GM12878 (cell line): ENCODE measurements at regions of chr15 and their contacts with region 1.

Region 1: DNA sequence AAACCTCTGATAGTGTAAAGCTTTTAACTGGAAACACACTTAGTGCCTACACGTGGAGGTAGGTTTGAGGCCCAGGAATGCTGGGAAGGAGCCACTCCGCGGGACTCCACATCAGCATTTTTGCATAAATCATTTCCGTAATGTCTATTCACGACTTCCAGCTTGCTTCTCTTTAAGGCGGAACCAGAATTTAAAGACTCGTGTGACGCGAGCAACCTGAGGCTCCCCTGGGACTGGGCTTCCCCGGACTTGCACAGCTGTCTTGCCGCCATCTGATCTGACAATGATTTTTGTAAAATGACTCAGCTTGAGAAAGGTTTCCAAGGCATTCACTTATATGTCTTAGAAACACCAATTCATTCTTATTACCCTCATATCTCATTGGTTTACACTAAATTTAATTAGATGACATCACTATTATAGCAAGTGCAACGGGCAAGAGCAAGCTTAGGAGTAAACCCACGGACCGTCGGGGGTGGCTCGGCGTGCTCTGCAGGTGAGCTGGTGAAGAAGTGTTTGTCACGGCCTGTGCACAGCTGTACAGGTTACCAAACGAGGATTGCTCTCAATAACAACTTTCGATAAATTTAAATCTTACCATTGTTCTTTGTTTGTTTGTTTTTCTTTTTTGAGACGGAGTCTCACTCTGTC is 95.2 kb downstream of the CHSY1 start:
- DNase-seq: peak; percentile 84
- ATAC-seq: peak; percentile 86
- H3K4me3 ChIP-seq: no peak overlapping the region
- H3K27ac ChIP-seq: peak overlapping the region; percentile 53
- H3K4me1 ChIP-seq: peaks cover 17% of the 10 kb centered on the region
- H3K27me3 ChIP-seq: no peaks in the 10 kb centered on the region
- CTCF ChIP-seq: no peak
- EP300 ChIP-seq: peak; percentile 40 to 75; a peak in 2 of 4 replicates
- POLR2A ChIP-seq: no peak
- RAD21 ChIP-seq: no peak

Region 2: DNA sequence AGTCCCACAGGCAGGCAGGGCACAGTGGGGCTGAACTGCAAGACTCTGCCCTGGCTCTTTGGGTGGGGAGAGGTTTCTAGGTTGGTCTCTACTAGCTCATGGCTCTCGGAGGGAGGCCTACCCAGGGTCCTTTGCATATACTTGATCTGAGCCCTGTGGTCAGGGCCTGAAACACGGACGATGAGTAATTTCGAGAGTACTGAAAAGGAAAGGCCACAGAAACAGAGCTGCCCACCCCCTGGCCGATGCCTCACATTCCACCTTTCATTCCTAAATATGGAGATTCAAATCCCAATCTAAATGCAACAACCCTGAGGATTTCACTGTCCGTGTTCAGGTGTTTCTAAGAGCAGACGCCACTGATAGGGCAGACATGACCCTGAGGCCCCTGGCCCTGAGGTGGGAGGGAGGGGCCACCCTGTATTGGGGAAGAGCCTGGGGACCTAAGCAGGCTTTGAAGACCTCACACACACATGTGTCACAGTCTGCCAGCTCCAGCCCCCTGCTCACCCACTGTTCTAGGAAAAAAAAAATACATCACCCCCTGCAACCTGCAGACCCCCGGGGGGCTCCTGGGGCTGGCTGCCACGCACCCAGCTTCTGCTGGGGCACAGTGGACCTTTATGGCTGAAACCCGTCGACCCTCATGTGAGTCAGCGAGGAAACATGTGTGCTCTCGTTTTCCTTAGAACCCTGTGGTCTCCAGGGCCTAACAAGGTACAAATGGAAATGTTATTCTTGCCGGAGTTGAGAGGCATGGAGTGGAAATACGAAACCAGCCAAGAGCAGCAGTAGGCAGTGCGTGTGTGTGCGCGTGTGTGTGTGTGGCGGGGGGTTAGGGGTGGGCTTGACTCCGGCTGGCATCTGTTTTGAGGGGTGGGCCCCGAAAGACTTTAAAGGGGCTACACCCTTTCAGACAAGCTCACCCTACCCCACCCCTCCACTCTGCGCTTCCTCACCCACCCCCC is 17.4 kb before region 1 on chr15:
- CTCF ChIA-PET with region 1: interaction called, 5 read pairs
- POLR2A ChIA-PET with region 1: interaction called, 5 read pairs
- RAD21 ChIA-PET with region 1: interaction called, 10 read pairs
- SMC1A ChIA-PET with region 1: interaction called, 6 read pairs
- in situ Hi-C with region 1: no loop called
- intact Hi-C with region 1: no loop called
- DNase-seq: peak; percentile 48
- ATAC-seq: peak; percentile 82
- H3K4me3 ChIP-seq: no peak overlapping the region
- H3K27ac ChIP-seq: peak overlapping the region; percentile 4; the same call in 1 of the 2 replicates
- H3K4me1 ChIP-seq: peaks cover 58% of the 10 kb centered on the region
- H3K27me3 ChIP-seq: no peaks in the 10 kb centered on the region
- CTCF ChIP-seq: no peak
- EP300 ChIP-seq: peak; percentile 71 to 76
- POLR2A ChIP-seq: no peak
- RAD21 ChIP-seq: no peak